ENCODE measurements at regions of chr22 and their contacts with region 1.

Region 1: GRCh38 chr22:27804470-27805297 is 3.1 kb upstream of the MN1 start:
- DNase-seq: peak; percentile 44
- ATAC-seq: peak; percentile 80
- H3K4me3 ChIP-seq: no peak overlapping the region
- H3K27ac ChIP-seq: no peak overlapping the region
- H3K4me1 ChIP-seq: peaks cover 5% of the 10 kb centered on the region; the same call in 1 of the 2 replicates
- H3K27me3 ChIP-seq: peaks cover 6 to 83% of the 10 kb centered on the region in 2 experiments
- CTCF ChIP-seq: peak; percentile 92
- EP300 ChIP-seq: no peak
- POLR2A ChIP-seq: no peak
- RAD21 ChIP-seq: peak; percentile 75

Region 2: GRCh38 chr22:26756675-26757293 is 1047.9 kb before region 1 on chr22:
- CTCF ChIA-PET with region 1: no interaction called
- POLR2A ChIA-PET with region 1: no interaction called
- in situ Hi-C with region 1: loop called (anchors 25 kb)
- intact Hi-C with region 1: no loop called
- DNase-seq: no peak
- ATAC-seq: peak; percentile 81
- H3K4me3 ChIP-seq: no peak overlapping the region; a peak in 1 of 6 replicates
- H3K27ac ChIP-seq: no peak overlapping the region
- H3K4me1 ChIP-seq: no peaks in the 10 kb centered on the region
- H3K27me3 ChIP-seq: no peaks in the 10 kb centered on the region
- CTCF ChIP-seq: peak; percentile 80
- EP300 ChIP-seq: no peak
- POLR2A ChIP-seq: no peak
- RAD21 ChIP-seq: peak; percentile 90

Region 3: DNA sequence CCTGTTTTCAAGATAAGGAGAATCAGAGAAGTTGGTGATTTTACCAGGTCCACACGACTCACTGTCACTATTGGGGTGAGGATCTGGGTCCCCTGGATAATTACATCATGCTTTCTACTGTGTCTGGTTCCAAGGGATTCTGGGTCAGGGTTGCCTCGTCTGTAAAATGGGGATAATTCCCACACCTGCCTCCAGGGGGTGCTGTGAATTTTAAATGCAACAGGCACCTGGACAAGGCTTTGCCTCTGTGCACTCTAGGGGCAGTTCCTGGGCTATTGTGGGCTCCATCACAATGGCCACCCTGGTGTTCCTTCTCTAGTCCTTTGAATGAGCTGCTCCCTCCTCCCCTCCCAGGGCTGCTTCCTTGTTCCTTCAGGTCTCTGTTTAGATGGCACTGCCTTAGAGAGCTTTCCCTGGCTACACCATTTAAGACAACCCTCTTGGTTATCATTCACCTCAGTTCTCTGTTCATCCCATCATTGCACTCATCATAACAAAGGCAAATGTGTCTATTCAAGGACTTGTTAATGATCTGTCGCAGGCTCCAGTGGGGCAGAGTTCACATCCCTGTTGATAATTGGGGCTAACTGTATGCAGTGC is 968.7 kb before region 1 on chr22:
- CTCF ChIA-PET with region 1: no interaction called
- POLR2A ChIA-PET with region 1: no interaction called
- in situ Hi-C with region 1: no loop called
- intact Hi-C with region 1: loop called (anchors 5 kb)
- DNase-seq: peak; percentile 26
- ATAC-seq: peak; percentile 63
- H3K4me3 ChIP-seq: no peak overlapping the region
- H3K27ac ChIP-seq: no peak overlapping the region
- H3K4me1 ChIP-seq: no peaks in the 10 kb centered on the region
- H3K27me3 ChIP-seq: peaks cover 1 to 18% of the 10 kb centered on the region in 2 experiments; a peak in 2 of 5 replicates
- CTCF ChIP-seq: peak; percentile 58
- EP300 ChIP-seq: no peak
- POLR2A ChIP-seq: no peak
- RAD21 ChIP-seq: no peak

Region 4: GRCh38 chr22:27405672-27406388 is 398.9 kb before region 1 on chr22:
- CTCF ChIA-PET with region 1: interaction called, 21 read pairs
- POLR2A ChIA-PET with region 1: no interaction called
- in situ Hi-C with region 1: loop called (anchors 5 kb)
- intact Hi-C with region 1: loop called (anchors 1 kb)
- DNase-seq: peak; percentile 16
- ATAC-seq: peak; percentile 94
- H3K4me3 ChIP-seq: no peak overlapping the region
- H3K27ac ChIP-seq: no peak overlapping the region
- H3K4me1 ChIP-seq: no peaks in the 10 kb centered on the region
- H3K27me3 ChIP-seq: peaks cover 0 to 5% of the 10 kb centered on the region in 2 experiments; a peak in 2 of 5 replicates
- CTCF ChIP-seq: peak; percentile 86
- EP300 ChIP-seq: no peak
- POLR2A ChIP-seq: no peak
- RAD21 ChIP-seq: peak; percentile 86

Region 5: DNA sequence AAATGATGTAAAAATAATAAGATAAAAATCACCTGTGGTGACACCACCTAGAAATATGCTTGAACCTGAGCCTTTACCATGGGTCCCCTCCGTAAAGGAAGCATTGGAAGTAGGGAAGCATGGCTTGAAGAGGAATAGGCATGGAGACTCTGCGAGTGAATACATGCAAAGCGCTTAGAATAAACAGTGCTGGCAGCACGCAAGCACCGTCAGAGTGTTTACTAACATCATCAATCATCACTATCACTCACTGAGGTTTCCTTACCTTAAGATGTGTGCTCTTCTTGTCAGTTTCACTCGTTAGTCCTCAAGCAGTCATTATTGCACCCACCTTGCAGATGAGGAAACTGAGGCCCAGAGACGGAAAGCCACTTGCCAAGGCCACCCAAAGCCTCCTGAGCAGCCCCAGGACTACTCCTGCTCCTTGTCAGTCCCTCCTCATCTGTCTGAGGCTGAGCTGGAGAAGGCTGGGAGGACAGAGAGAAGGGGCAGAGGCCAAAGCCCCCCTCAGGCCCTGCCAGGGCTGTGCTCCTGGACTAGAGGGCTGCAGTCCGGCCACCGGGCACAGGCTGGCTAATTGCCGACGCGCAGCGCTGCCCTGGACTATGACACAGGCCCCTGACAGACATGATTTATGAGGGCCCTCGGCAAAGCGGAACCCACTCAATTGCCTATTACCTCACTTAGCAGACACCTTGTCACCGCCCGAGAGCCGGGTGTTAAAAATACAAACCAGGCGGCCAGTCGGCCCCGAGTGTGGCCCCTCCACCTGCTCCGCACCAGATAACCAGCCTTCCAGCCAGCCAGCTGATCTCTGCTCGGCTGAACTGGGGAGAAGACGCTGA is 172.0 kb before region 1 on chr22:
- CTCF ChIA-PET with region 1: no interaction called
- POLR2A ChIA-PET with region 1: no interaction called
- in situ Hi-C with region 1: no loop called
- intact Hi-C with region 1: loop called (anchors 5 kb)
- DNase-seq: no peak
- ATAC-seq: peak; percentile 39
- H3K4me3 ChIP-seq: peak overlapping the region in 1 of 3 experiments; percentile 23; a peak in 1 of 6 replicates
- H3K27ac ChIP-seq: no peak overlapping the region
- H3K4me1 ChIP-seq: peaks cover 28% of the 10 kb centered on the region
- H3K27me3 ChIP-seq: 0 out of 5 replicates have a peak, but pooled peaks cover 0 to 4% of the 10 kb centered on the region in 2 experiments
- CTCF ChIP-seq: no peak
- EP300 ChIP-seq: no peak
- POLR2A ChIP-seq: no peak
- RAD21 ChIP-seq: no peak

Region 6: DNA sequence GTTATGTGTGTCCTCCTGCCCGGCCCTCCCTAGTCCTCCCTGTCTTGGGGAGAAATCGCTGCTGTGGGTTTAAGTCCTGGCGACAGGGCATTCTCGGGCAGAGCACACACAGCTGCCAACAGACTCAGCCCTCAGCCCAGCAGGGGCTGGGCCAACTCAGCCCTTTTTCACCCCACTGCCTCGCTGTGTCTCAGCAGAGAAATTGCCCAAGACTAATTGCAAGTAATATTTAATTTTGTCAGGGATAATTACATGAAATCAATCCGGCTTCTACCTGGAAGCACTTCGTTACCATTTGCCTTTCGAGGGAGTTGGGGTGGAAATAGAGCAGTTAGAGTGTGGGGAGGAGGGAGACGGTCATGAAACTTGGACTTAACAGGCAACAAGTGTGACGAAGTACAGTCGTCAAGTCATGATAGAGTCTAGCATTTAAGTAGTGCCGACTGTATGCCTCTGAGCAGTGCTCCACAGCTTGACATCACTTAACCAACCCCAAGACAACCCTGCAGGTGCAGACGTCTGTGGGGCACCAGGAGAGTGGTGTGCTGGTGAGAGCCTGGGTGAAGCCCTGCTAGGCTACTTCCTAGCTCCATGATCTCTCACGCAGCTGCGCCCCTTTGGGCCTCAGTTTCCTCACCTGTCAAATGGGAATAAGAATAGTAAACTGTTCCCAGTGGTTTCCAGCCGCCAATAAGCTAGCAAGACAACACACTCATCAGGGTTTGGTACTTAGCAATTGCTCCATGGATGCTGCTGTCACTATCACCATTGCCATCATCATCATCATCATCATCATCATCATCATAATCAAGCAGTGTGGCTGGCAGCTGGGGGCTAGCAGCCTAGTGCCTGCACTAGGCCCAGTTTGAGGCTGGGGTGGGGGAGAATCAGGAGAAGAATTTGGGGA is 32.4 kb before region 1 on chr22:
- CTCF ChIA-PET with region 1: no interaction called
- POLR2A ChIA-PET with region 1: no interaction called
- in situ Hi-C with region 1: no loop called
- intact Hi-C with region 1: no loop called
- DNase-seq: no peak
- ATAC-seq: no peak
- H3K4me3 ChIP-seq: no peak overlapping the region
- H3K27ac ChIP-seq: no peak overlapping the region
- H3K4me1 ChIP-seq: no peaks in the 10 kb centered on the region
- H3K27me3 ChIP-seq: peaks cover 2 to 18% of the 10 kb centered on the region in 2 experiments; a peak in 3 of 5 replicates
- CTCF ChIP-seq: no peak
- EP300 ChIP-seq: no peak
- POLR2A ChIP-seq: no peak
- RAD21 ChIP-seq: no peak